Activated T-helper 1 cell treated with anti-CD3 and anti-CD28 coated beads, Interleukin-12 subunit alpha, Interleukin-12 subunit beta, Interleukin-2, Interleukin-4 antibody, amounts not matched to agents 30 ng/mL and 10 ng/mL and 1 ng/mL, durations not matched to agents 14 hours and 24 hours and 36 hours (primary cell): ENCODE measurements at regions of chr15 and their contacts with region 1.

Region 1: DNA sequence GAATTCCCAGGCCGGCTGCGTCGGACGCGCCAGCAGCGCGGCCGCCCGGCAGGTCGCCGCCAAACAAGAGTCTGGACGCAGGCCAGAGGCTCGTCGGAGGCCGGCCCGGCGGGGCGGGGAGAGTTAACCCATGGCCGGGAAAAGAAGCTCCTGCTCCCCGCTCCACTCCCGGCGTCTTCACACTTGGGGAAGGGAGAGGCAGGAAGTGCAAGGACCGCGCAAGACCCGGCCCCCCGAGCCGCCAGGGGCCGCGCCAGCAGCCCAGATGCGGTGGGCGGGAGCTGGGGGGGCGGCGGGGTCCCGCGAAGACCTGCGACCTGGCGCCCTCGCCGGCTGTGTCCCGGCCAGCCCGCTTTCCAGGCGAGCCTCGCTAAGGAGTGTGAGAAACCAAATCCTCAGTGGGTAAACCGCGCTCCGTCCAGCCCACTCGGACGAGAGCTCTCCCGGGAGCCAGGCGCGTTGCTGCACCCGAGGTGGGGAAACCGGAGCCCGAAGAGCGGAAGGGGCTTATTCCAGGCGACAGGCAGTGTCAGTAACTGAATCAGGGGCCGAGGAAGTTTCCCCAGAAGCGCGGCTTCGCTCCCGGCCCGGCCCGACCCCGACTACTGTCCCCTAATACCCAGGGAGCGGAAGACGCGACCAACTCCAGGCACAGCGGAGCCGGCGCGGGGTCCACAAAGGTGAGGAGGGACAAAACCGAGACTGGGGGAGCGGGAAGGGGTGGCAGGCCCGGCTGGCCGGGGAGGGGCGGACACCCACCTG is 721 bp downstream of the ADAMTS7 start:
- DNase-seq: no peak
- H3K4me3 Mint-ChIP-seq: peak overlapping the region; percentile 67
- H3K27ac Mint-ChIP-seq: no peak overlapping the region
- H3K4me1 Mint-ChIP-seq: no peaks in the 10 kb centered on the region
- H3K27me3 Mint-ChIP-seq: peaks cover 50% of the 10 kb centered on the region

Region 2: GRCh38 chr15:78761891-78762385 is 48.6 kb before region 1 on chr15:
- intact Hi-C with region 1: loop called (anchors 2 kb)
- DNase-seq: no peak
- H3K4me3 Mint-ChIP-seq: no peak overlapping the region
- H3K27ac Mint-ChIP-seq: peak overlapping the region; percentile 89
- H3K4me1 Mint-ChIP-seq: peaks cover 17% of the 10 kb centered on the region
- H3K27me3 Mint-ChIP-seq: no peaks in the 10 kb centered on the region

Region 3: GRCh38 chr15:78790030-78790429 is 20.5 kb before region 1 on chr15:
- intact Hi-C with region 1: loop called (anchors 1 kb)
- DNase-seq: no peak
- H3K4me3 Mint-ChIP-seq: peak overlapping the region; percentile 28
- H3K27ac Mint-ChIP-seq: peak overlapping the region; percentile 31
- H3K4me1 Mint-ChIP-seq: peaks cover 10% of the 10 kb centered on the region
- H3K27me3 Mint-ChIP-seq: peaks cover 3% of the 10 kb centered on the region